HepG2 (cell line): ENCODE measurements at regions of chr6 and their contacts with region 1.

Region 1: DNA sequence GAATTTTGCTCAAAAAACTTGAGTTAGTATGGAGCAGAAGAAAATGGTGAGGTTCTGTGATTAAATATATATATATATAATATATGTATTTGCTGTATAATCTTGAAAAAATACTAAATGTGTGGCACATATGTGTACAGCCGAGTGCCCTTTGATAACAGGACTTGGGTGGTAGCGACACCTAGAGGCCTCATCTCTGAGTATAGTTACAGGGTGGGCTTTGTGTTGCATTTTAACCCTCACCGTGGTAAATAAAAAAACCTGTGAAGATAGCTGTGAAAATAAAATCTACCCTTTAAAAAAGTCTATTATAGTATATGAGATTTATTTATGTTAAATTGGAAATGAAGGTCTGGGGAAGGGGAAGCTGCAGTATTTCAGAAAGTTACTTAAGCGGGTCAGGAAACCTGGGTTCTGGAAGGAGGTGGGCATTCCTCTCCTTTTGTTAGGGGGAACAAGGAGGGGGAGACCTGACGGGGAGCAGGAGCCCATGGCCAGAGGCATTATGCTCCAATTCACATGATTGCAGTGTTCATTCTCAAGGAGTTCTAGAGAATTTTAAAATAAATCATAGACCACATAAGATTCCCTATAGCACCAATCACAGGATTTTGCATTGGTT is 82.7 kb downstream of the SH3BGRL2 start:
- DNase-seq: peak; percentile 54
- ATAC-seq: peak; percentile 88
- H3K4me3 ChIP-seq: no peak overlapping the region
- H3K27ac ChIP-seq: no peak overlapping the region
- H3K4me1 ChIP-seq: no peaks in the 10 kb centered on the region
- H3K27me3 ChIP-seq: no peaks in the 10 kb centered on the region
- CTCF ChIP-seq: peak; percentile 72
- EP300 ChIP-seq: no peak
- POLR2A ChIP-seq: no peak
- RAD21 ChIP-seq: peak; percentile 40; the same call in 1 of the 2 replicates

Region 2: GRCh38 chr6:79399499-79399898 is 314.3 kb before region 1 on chr6:
- CTCF ChIA-PET with region 1: no interaction called
- POLR2A ChIA-PET with region 1: no interaction called
- in situ Hi-C with region 1: loop called (anchors 10 kb)
- intact Hi-C with region 1: no loop called
- DNase-seq: peak; percentile 78
- ATAC-seq: peak; percentile 95
- H3K4me3 ChIP-seq: no peak overlapping the region
- H3K27ac ChIP-seq: peak overlapping the region; percentile 7
- H3K4me1 ChIP-seq: peaks cover 35% of the 10 kb centered on the region
- H3K27me3 ChIP-seq: no peaks in the 10 kb centered on the region
- CTCF ChIP-seq: no peak
- EP300 ChIP-seq: peak in 1 of 2 experiments; percentile 49; a peak in 1 of 4 replicates
- POLR2A ChIP-seq: no peak
- RAD21 ChIP-seq: no peak

Region 3: DNA sequence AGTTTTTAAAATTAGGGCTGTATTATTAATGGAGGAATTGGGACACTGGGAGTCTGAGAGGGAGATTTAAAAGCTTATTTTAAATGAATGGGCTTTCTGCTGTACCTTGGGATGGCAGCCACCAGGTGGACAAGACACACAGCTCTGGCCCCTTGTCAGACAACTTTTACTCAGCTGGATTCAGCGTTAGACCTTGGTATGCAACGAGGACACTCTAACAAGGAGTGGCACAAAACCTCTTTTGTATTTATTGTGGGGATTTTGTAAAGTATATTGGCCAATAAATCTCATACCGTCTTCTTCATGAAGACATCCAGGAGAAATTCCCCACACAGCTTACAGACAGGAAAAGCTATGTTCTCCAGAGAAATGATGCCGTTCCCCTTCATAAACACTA is 282.3 kb before region 1 on chr6:
- CTCF ChIA-PET with region 1: interaction called, 9 read pairs
- POLR2A ChIA-PET with region 1: no interaction called
- in situ Hi-C with region 1: no loop called
- intact Hi-C with region 1: loop called (anchors 1 kb)
- DNase-seq: peak; percentile 21
- ATAC-seq: peak; percentile 92
- H3K4me3 ChIP-seq: no peak overlapping the region
- H3K27ac ChIP-seq: no peak overlapping the region
- H3K4me1 ChIP-seq: no peaks in the 10 kb centered on the region
- H3K27me3 ChIP-seq: no peaks in the 10 kb centered on the region
- CTCF ChIP-seq: peak; percentile 38
- EP300 ChIP-seq: no peak
- POLR2A ChIP-seq: no peak
- RAD21 ChIP-seq: peak; percentile 34; the same call in 1 of the 2 replicates

Region 4: GRCh38 chr6:79466207-79466834 is 247.5 kb before region 1 on chr6:
- CTCF ChIA-PET with region 1: no interaction called
- POLR2A ChIA-PET with region 1: no interaction called
- in situ Hi-C with region 1: no loop called
- intact Hi-C with region 1: loop called (anchors 2 kb)
- DNase-seq: no peak
- ATAC-seq: no peak
- H3K4me3 ChIP-seq: no peak overlapping the region
- H3K27ac ChIP-seq: no peak overlapping the region
- H3K4me1 ChIP-seq: peaks cover 76% of the 10 kb centered on the region
- H3K27me3 ChIP-seq: no peaks in the 10 kb centered on the region
- CTCF ChIP-seq: peak; percentile 51
- EP300 ChIP-seq: no peak
- POLR2A ChIP-seq: no peak
- RAD21 ChIP-seq: no peak

Region 5: GRCh38 chr6:79646006-79646405 is 67.8 kb before region 1 on chr6:
- CTCF ChIA-PET with region 1: interaction called, 3 read pairs
- POLR2A ChIA-PET with region 1: no interaction called
- in situ Hi-C with region 1: no loop called
- intact Hi-C with region 1: loop called (anchors 10 kb)
- DNase-seq: no peak
- ATAC-seq: peak; percentile 75
- H3K4me3 ChIP-seq: no peak overlapping the region
- H3K27ac ChIP-seq: no peak overlapping the region
- H3K4me1 ChIP-seq: peaks cover 43% of the 10 kb centered on the region
- H3K27me3 ChIP-seq: no peaks in the 10 kb centered on the region
- CTCF ChIP-seq: peak; percentile 28; the same call in 1 of the 2 replicates
- EP300 ChIP-seq: no peak
- POLR2A ChIP-seq: no peak
- RAD21 ChIP-seq: no peak

Region 6: DNA sequence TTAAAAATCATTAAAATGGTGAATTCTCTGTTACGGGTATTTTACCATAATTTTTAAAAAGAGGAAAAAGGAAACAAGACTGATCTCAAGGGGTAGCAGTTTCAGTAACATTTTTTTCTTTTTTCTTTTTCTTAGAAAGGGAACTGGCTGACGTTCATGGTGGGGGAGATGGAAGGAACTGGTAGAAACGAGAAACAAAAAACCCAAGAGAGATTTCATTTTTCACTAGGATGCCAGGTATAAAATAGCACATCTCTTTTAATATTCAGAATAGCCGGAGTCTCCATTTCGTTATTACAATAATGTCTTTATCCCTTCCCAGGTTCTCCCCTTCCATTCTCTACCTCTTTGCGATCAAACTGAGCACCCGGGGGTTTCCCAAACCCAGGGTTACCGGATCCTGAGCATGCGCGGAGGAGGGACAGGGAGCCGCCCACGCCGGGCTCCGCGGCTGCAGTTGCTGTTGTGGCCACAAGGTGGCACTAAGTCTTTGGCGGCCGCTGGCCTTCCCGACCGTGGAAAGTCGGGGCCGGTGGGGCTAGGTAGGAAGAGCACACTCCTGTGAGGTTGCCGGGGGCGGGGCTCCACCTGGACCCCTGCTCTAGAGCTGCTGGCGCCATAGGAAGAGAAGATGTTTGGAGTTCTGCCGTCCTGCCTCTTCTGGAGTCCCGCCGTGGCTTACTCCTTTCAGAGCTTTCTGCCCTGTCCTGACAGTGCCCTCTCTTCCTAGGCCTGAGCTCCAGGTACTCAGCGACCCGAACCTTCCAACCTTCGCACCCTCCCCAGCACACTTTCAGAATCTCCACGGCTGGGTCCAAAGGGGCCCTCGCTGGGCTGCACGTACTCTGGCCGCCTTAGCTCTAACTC is 64.1 kb after region 1 on chr6:
- CTCF ChIA-PET with region 1: no interaction called
- POLR2A ChIA-PET with region 1: no interaction called
- in situ Hi-C with region 1: no loop called
- intact Hi-C with region 1: no loop called
- DNase-seq: peak; percentile 43
- ATAC-seq: peak; percentile 94
- H3K4me3 ChIP-seq: peak overlapping the region; percentile 41 to 75 (median 48)
- H3K27ac ChIP-seq: no peak overlapping the region
- H3K4me1 ChIP-seq: peaks cover 18% of the 10 kb centered on the region
- H3K27me3 ChIP-seq: peaks cover 0 to 16% of the 10 kb centered on the region in 2 experiments; a peak in 1 of 5 replicates
- CTCF ChIP-seq: peak; percentile 97
- EP300 ChIP-seq: no peak
- POLR2A ChIP-seq: no peak
- RAD21 ChIP-seq: peak; percentile 65